ENCODE measurements at regions of chr17 and their contacts with region 1.

Region 1: GRCh38 chr17:48024937-48025906 is 12.4 kb downstream of the COPZ2 start:
- DNase-seq: peak; percentile 97
- H3K4me3 ChIP-seq: peak overlapping the region; percentile 64
- H3K27ac ChIP-seq: no peak overlapping the region
- H3K4me1 ChIP-seq: peaks cover 32% of the 10 kb centered on the region
- CTCF ChIP-seq: peak; percentile 82

Region 2: GRCh38 chr17:48047741-48048383 is 22.6 kb after region 1 on chr17 and contains the start of gene NFE2L1:
- CTCF ChIA-PET with region 1: interaction called, 3 read pairs
- POLR2A ChIA-PET with region 1: interaction called, 4 read pairs
- intact Hi-C with region 1: loop called (anchors 2 kb)
- DNase-seq: peak; percentile 99
- H3K4me3 ChIP-seq: peak within 1 kb of the TSS; percentile 78
- H3K27ac ChIP-seq: peak within 1 kb of the TSS; percentile 66
- H3K4me1 ChIP-seq: peaks cover 60% of the 10 kb centered on the region
- CTCF ChIP-seq: no peak
- total RNA-seq, gene NFE2L1: 42.3 and 60.1 TPM in 2 replicates

Region 3: GRCh38 chr17:48074315-48075081 is 49.3 kb after region 1 on chr17:
- CTCF ChIA-PET with region 1: interaction called, 3 read pairs
- POLR2A ChIA-PET with region 1: no interaction called
- intact Hi-C with region 1: loop called (anchors 1 kb)
- DNase-seq: peak; percentile 75
- H3K4me3 ChIP-seq: no peak overlapping the region
- H3K27ac ChIP-seq: no peak overlapping the region
- H3K4me1 ChIP-seq: no peaks in the 10 kb centered on the region
- CTCF ChIP-seq: peak; percentile 92

Region 4: GRCh38 chr17:48101012-48101720 is 75.9 kb after region 1 on chr17 and contains the start of gene CBX1:
- CTCF ChIA-PET with region 1: no interaction called
- POLR2A ChIA-PET with region 1: no interaction called
- intact Hi-C with region 1: loop called (anchors 2 kb)
- DNase-seq: peak; percentile 97
- H3K4me3 ChIP-seq: peak within 1 kb of the TSS; percentile 75
- H3K27ac ChIP-seq: peak within 1 kb of the TSS; percentile 70
- H3K4me1 ChIP-seq: peaks cover 29% of the 10 kb centered on the region
- CTCF ChIP-seq: no peak
- total RNA-seq, gene CBX1: 59.7 and 64.5 TPM in 2 replicates

Region 5: GRCh38 chr17:48131216-48131824 is 106.1 kb after region 1 on chr17:
- CTCF ChIA-PET with region 1: interaction called, 4 read pairs
- POLR2A ChIA-PET with region 1: no interaction called
- intact Hi-C with region 1: loop called (anchors 1 kb)
- DNase-seq: peak; percentile 77
- H3K4me3 ChIP-seq: no peak overlapping the region
- H3K27ac ChIP-seq: no peak overlapping the region
- H3K4me1 ChIP-seq: no peaks in the 10 kb centered on the region
- CTCF ChIP-seq: peak; percentile 96

Region 6: GRCh38 chr17:48618256-48618897 is 593.2 kb after region 1 on chr17:
- CTCF ChIA-PET with region 1: no interaction called
- POLR2A ChIA-PET with region 1: no interaction called
- intact Hi-C with region 1: loop called (anchors 5 kb)
- DNase-seq: peak; percentile 76
- H3K4me3 ChIP-seq: no peak overlapping the region
- H3K27ac ChIP-seq: no peak overlapping the region
- H3K4me1 ChIP-seq: no peaks in the 10 kb centered on the region
- CTCF ChIP-seq: peak; percentile 99